ENCODE measurements at regions of chr5 and their contacts with region 1.

Region 1: DNA sequence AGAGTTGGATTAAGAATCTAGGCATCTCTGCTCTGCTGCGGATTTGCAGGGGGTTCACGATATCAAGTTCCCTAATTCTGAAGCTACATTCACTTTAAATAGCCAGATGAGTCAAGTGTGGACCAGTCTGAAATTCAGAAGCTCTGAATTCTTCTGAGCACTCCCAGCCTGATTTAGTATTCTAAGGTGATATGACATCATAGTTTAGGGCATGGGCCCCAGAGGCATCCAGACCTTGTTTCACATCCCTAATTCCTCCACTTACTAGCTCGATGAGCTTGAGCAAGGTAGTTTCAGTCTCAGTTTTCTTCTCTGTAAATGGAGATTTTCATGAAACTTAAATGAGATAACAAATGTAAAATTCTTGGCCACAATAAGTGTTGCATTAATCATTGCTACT is 65.2 kb downstream of the TMEM167A start:
- DNase-seq: no peak
- ATAC-seq: peak; percentile 97
- H3K4me3 Mint-ChIP-seq: peak overlapping the region; percentile 56
- H3K27ac Mint-ChIP-seq: peak overlapping the region; percentile 68
- H3K4me1 Mint-ChIP-seq: peaks cover 18% of the 10 kb centered on the region
- H3K27me3 Mint-ChIP-seq: no peaks in the 10 kb centered on the region
- CTCF ChIP-seq: no peak

Region 2: GRCh38 chr5:83026930-83027687 is 15.1 kb after region 1 on chr5:
- CTCF ChIA-PET with region 1: no interaction called
- POLR2A ChIA-PET with region 1: interaction called, 12 read pairs
- intact Hi-C with region 1: loop called (anchors 1 kb)
- DNase-seq: no peak
- ATAC-seq: peak; percentile 64
- H3K4me3 Mint-ChIP-seq: peak overlapping the region; percentile 38
- H3K27ac Mint-ChIP-seq: peak overlapping the region; percentile 37
- H3K4me1 Mint-ChIP-seq: peaks cover 15% of the 10 kb centered on the region
- H3K27me3 Mint-ChIP-seq: no peaks in the 10 kb centered on the region
- CTCF ChIP-seq: no peak

Measured in activated B cell treated with CpG ODN at 0.5 μM for 24 hours (primary cell).